HepG2 (cell line): ENCODE measurements at regions of chr12 and their contacts with region 1.

Region 1: GRCh38 chr12:122399592-122400373 is 22.7 kb downstream of the CLIP1 start:
- DNase-seq: peak; percentile 91
- ATAC-seq: peak; percentile 78
- H3K4me3 ChIP-seq: peak overlapping the region; percentile 24 to 62 (median 35); a peak in 5 of 6 replicates
- H3K27ac ChIP-seq: peak overlapping the region; percentile 94
- H3K4me1 ChIP-seq: peaks cover 58% of the 10 kb centered on the region
- H3K27me3 ChIP-seq: no peaks in the 10 kb centered on the region
- CTCF ChIP-seq: peak; percentile 82
- EP300 ChIP-seq: peak in 1 of 2 experiments; percentile 74; a peak in 2 of 4 replicates
- POLR2A ChIP-seq: peak; percentile 26; a peak in 1 of 4 replicates
- RAD21 ChIP-seq: peak; percentile 91

Region 2: GRCh38 chr12:122265931-122266771 is 133.6 kb before region 1 on chr12 and contains the start of gene VPS33A:
- CTCF ChIA-PET with region 1: no interaction called
- POLR2A ChIA-PET with region 1: no interaction called
- in situ Hi-C with region 1: no loop called
- intact Hi-C with region 1: no loop called
- DNase-seq: peak; percentile 94
- ATAC-seq: peak; percentile 93
- H3K4me3 ChIP-seq: peak within 1 kb of the TSS; percentile 87 to 95 (median 94)
- H3K27ac ChIP-seq: peak within 1 kb of the TSS; percentile 86
- H3K4me1 ChIP-seq: peaks cover 16% of the 10 kb centered on the region
- H3K27me3 ChIP-seq: no peaks in the 10 kb centered on the region; a peak in 1 of 5 replicates
- CTCF ChIP-seq: peak; percentile 29
- EP300 ChIP-seq: peak; percentile 15 to 70; a peak in 3 of 4 replicates
- POLR2A ChIP-seq: peak; percentile 95 to 97
- RAD21 ChIP-seq: peak; percentile 31
- total RNA-seq, gene VPS33A: 43.6 and 58.0 TPM in 2 replicates

Region 3: DNA sequence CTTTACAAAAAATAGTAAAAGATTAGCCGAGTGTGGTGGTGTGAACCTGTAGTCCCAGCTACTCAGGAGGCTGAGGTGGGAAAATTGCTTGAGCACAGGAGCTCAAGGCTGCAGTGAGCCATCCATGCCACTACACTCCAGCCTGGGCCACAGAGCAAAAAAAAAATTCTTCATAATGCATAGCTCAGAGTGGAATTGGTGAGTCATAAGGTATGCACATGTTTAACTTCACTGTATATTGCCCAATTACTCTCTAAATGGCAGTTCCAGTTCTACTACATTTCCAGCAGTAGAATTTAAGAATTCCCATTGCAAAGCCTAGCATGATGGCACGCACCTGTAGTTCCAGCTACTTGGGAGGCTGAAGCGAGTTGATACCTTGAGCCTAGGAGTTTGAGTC is 49.6 kb after region 1 on chr12:
- CTCF ChIA-PET with region 1: no interaction called
- POLR2A ChIA-PET with region 1: interaction called, 15 read pairs
- in situ Hi-C with region 1: no loop called
- intact Hi-C with region 1: no loop called
- DNase-seq: peak; percentile 82
- ATAC-seq: peak; percentile 80
- H3K4me3 ChIP-seq: no peak overlapping the region
- H3K27ac ChIP-seq: no peak overlapping the region
- H3K4me1 ChIP-seq: peaks cover 42% of the 10 kb centered on the region
- H3K27me3 ChIP-seq: no peaks in the 10 kb centered on the region
- CTCF ChIP-seq: no peak
- EP300 ChIP-seq: peak in 1 of 2 experiments; percentile 57; a peak in 1 of 4 replicates
- POLR2A ChIP-seq: no peak
- RAD21 ChIP-seq: no peak

Region 4: GRCh38 chr12:122471324-122472226 is 71.8 kb after region 1 on chr12:
- CTCF ChIA-PET with region 1: interaction called, 31 read pairs
- POLR2A ChIA-PET with region 1: interaction called, 35 read pairs
- in situ Hi-C with region 1: loop called (anchors 5 kb)
- intact Hi-C with region 1: loop called (anchors 1 kb)
- DNase-seq: peak; percentile 77
- ATAC-seq: peak; percentile 52
- H3K4me3 ChIP-seq: no peak overlapping the region
- H3K27ac ChIP-seq: no peak overlapping the region
- H3K4me1 ChIP-seq: peaks cover 7% of the 10 kb centered on the region
- H3K27me3 ChIP-seq: no peaks in the 10 kb centered on the region
- CTCF ChIP-seq: peak; percentile 71
- EP300 ChIP-seq: no peak
- POLR2A ChIP-seq: no peak
- RAD21 ChIP-seq: peak; percentile 48; the same call in 1 of the 2 replicates

Region 5: GRCh38 chr12:122500685-122501488 is 101.1 kb after region 1 on chr12 and contains the start of gene ZCCHC8:
- CTCF ChIA-PET with region 1: no interaction called
- POLR2A ChIA-PET with region 1: interaction called, 59 read pairs
- in situ Hi-C with region 1: no loop called
- intact Hi-C with region 1: no loop called
- DNase-seq: peak; percentile 96
- ATAC-seq: peak; percentile 94
- H3K4me3 ChIP-seq: peak within 1 kb of the TSS; percentile 84 to 98 (median 86)
- H3K27ac ChIP-seq: peak within 1 kb of the TSS; percentile 98
- H3K4me1 ChIP-seq: peaks cover 34% of the 10 kb centered on the region
- H3K27me3 ChIP-seq: no peaks in the 10 kb centered on the region; a peak in 1 of 5 replicates
- CTCF ChIP-seq: peak; percentile 45
- EP300 ChIP-seq: no peak; a peak in 1 of 4 replicates
- POLR2A ChIP-seq: peak; percentile 78 to 92
- RAD21 ChIP-seq: no peak
- total RNA-seq, gene ZCCHC8: 14.2 and 20.9 TPM in 2 replicates